ENCODE measurements at regions of chr14 and their contacts with region 1.

Region 1: DNA sequence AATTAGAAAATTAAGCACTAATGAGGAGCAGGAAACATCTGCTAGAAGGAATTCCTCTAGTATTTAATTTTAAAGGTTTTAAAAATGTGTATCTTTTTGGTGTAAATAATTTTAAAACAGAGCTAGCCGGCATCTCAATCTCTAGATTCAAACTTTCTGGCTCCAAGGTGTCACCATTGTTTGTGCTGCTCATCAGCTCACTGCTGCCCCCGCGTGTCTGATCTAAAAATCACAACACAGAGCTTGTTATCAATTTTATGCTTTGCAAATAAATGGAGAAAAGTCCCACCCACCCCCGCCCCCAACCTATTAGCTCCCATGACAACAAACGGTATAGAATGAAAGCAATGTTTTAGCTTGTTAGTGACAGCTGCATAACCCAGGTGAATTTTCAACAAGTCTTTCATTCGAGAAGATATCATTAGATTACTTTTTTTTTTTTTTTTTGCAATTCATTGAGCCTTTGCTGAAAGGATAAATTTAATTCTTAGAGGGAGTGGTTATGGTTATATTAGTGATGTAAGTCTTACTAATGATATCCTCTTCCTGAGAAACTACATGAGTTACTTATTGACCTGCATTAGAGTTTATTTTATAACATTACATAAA is 11.3 kb upstream of the ABHD12B start:
- DNase-seq: peak; percentile 65 to 79
- H3K4me3 ChIP-seq: peak overlapping the region; percentile 43 to 71 (median 61)
- H3K27ac ChIP-seq: peak overlapping the region; percentile 73 to 81
- H3K4me1 ChIP-seq: no peaks in the 10 kb centered on the region
- H3K27me3 ChIP-seq: no peaks in the 10 kb centered on the region
- CTCF ChIP-seq: peak; percentile 21 to 55 (median 47)
- POLR2A ChIP-seq: no peak

Region 2: DNA sequence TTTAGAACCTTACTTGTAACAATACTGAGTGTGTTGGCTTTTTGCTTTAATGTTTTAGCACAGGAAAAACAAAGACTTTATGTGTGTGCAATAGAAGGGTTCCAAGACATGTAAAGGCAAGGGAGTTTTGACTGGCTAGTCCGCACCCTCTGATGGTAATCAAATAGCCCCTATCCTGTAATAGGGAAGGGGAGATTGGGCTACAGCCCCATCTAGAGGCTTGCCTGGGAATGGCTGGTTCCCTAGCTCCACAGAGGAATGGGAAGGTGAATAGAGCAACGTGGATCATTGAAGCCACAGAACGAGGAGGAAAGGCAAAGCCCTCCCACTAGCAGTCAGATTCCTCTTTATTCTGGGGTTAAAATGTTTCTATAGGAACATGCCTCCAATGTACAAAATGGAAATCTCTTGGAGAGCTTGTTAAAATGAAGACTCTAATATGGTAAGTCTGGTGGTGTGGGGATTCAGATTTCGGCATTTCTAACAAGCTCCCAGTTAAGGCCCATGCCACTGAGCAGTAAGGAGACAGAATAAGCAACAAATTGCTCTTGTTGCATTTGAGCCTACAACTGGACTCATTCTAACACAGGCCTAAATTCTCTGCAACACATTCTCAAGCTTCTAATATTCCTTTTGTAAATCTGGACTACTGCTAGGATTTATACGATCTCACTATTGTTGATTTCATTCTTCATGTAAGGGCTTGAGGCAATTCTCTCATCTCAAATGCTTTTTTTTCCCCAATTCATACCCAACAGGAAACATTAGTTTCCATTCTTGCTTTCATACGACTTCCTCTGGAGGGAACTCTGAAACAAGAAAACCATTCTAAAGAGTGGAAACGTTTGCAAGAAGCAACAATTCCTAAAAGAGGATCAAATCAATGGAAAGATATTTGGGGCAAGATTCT is 86.7 kb before region 1 on chr14:
- intact Hi-C with region 1: loop called (anchors 10 kb)
- DNase-seq: no peak
- H3K4me3 ChIP-seq: no peak overlapping the region
- H3K27ac ChIP-seq: peak overlapping the region; percentile 69 to 83
- H3K4me1 ChIP-seq: no peaks in the 10 kb centered on the region
- H3K27me3 ChIP-seq: no peaks in the 10 kb centered on the region
- CTCF ChIP-seq: peak; percentile 21 to 82 (median 73)
- POLR2A ChIP-seq: no peak